Heart right ventricle (tissue), 16 donors: ENCODE measurements at regions of chr9 and their contacts with region 1.

Region 1: DNA sequence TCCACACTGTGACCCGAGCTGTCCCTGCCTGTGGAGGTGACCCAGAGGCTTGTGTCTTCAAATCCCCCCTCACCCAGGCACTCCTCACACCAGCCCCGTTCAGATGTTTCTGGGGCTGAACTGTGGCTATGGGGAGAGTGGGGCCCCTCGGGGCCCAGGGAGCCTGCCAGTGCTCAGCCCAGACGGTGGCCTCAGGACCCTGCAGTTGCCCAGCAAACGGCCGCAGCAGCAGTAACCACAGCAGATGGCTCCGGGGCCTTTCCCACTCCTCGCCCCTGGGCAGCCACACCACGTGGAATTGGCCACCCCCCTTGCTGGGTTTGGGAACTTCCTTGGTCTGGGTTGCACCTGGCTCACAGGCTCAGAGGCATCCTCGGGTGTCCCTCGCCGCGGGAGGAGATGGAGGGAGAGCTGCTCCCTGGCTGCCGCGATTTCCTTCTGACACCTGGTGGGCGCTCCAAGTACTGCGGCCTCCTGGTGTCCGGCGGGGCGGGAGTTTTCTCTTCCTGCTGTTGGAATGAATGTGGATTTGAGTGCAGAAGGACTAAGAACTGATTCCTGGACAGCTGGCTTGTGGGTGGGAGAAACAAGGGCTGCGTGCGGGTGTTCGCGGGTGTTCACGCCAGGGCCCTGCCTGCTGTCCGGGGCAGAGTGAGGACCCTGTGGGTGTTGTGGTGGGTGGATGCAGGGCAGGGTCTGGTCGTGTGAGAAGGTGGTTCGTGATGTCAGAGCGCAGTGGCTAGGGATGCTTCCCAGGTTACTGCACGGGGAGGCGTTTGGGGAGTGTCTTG is 97.5 kb downstream of the COL5A1 start:
- DNase-seq: peak; percentile 77 to 78
- ATAC-seq: peak; percentile 39 to 66 (median 58)
- H3K4me3 ChIP-seq: no peak overlapping the region
- H3K27ac ChIP-seq: peak overlapping the region in 2 of 10 donors; percentile 35 to 41
- H3K4me1 ChIP-seq: peaks cover 4 to 47% (median 11%) of the 10 kb centered on the region in 9 donors
- H3K27me3 ChIP-seq: no peaks in the 10 kb centered on the region
- CTCF ChIP-seq: peak; percentile 79 to 96 (median 90)

Region 2: DNA sequence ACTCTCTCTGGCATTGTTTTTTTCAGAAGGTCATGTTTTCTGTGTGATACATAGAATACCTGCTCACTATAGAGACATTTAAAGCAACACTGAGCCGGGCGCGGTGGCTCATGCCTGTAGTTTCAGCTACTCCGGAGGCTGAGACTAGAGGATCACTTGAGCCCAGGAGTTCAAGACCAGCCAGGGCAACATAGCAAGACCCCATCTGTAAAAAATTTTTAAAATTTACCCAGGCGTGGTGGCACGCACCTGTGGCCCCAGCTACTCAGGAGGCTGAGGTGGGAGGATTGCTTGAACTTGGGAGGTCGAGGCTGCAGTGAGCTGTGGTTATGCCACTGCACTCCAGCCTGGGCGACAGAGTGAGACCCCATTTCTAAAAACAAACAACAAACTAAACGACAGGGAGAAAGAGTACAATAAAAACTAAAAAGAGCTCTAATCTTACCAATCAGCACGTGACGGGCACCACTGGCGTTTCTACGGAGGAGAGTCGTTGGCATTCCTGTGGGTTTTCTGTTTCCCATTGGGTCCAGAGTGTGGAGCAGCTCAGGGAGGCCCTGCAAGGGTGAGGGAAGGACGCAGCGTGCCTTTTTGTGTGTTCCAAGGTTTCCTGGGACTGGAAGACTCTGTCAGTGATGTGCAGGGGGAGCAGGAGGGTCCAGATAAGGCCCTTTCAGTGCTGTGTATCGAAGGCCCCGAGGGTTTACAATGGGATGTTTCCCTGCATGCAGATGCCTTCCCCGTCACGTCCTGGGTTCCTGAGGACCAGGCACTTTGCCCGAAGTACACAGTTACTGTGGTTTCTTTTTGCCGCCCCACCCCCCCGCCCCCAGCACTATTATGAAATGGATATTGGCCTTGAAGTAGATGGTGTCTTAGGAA is 567.5 kb before region 1 on chr9:
- intact Hi-C with region 1: loop called in 4 of 10 experiments (anchors 5 to 10 kb)
- DNase-seq: no peak
- ATAC-seq: peak in 4 of 8 donors; percentile 2 to 28 (median 10)
- H3K4me3 ChIP-seq: no peak overlapping the region
- H3K27ac ChIP-seq: peak overlapping the region in 6 of 10 donors; percentile 31 to 62 (median 48)
- H3K4me1 ChIP-seq: peaks cover 0 to 42% (median 18%) of the 10 kb centered on the region in 9 donors
- H3K27me3 ChIP-seq: peaks cover 0 to 23% (median 20%) of the 10 kb centered on the region in 7 donors
- CTCF ChIP-seq: no peak

Region 3: GRCh38 chr9:134449221-134449894 is 289.7 kb before region 1 on chr9:
- intact Hi-C with region 1: loop called (anchors 1 to 10 kb)
- DNase-seq: peak; percentile 87 to 94
- ATAC-seq: peak; percentile 93 to 97 (median 96)
- H3K4me3 ChIP-seq: no peak overlapping the region
- H3K27ac ChIP-seq: no peak overlapping the region
- H3K4me1 ChIP-seq: peaks cover 0 to 6% (median 0%) of the 10 kb centered on the region in 9 donors
- H3K27me3 ChIP-seq: no peaks in the 10 kb centered on the region
- CTCF ChIP-seq: peak; percentile 86 to 96 (median 93)

Region 4: DNA sequence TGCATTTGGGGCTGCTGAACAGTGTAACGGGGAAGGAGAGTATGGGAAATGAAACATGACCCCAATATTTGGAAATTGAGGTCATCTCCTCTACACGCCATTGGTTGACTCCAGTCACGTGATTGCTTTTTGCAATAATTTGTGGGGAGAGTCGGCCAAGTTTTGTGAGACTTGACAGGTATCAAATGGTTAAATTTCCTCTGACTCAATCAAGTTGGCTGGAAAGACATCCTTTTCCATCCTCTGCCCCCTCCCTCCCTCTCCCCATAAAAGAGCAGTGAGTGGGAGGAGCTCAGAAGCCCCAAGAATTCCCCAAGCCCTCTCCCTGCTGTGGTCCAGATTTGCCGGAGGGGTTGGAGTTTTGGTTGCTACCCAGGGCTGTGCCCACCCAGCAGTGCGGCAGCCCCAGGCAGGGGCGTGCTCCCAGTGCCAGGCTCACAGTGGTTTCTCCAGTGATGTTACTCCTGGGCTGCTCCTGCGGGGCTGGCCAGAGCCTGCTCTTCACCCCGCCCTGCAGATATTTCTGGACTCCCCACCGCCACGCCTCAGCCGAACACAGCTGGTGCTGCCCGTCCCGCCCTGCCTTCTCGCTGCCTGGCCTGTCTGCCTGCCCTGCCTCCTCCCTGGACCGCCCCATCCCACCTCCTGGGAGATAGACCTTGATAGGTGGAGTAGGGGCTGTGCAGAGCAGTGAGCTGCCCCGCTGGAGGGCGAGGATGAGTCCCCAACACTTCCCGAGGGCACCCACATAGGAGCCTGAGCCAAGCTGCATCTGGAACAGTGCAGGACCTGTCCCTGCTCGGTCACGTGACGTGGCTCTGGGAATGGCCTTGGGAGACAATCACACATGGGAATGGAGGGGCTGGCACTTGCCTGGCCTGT is 94.1 kb before region 1 on chr9:
- intact Hi-C with region 1: no loop called
- DNase-seq: peak; percentile 73 to 76
- ATAC-seq: peak; percentile 39 to 72 (median 53)
- H3K4me3 ChIP-seq: peak overlapping the region in 9 of 10 donors; percentile 24 to 49 (median 47)
- H3K27ac ChIP-seq: peak overlapping the region in 9 of 10 donors; percentile 36 to 66 (median 58)
- H3K4me1 ChIP-seq: peaks cover 5 to 58% (median 38%) of the 10 kb centered on the region in 9 donors
- H3K27me3 ChIP-seq: peaks cover 0 to 30% (median 0%) of the 10 kb centered on the region in 7 donors
- CTCF ChIP-seq: no peak

Region 5: GRCh38 chr9:134689321-134690181 is 49.5 kb before region 1 on chr9:
- intact Hi-C with region 1: loop called in 1 of 10 experiments (anchors 5 kb)
- DNase-seq: peak; percentile 70 to 76
- ATAC-seq: peak; percentile 71 to 89 (median 82)
- H3K4me3 ChIP-seq: no peak overlapping the region
- H3K27ac ChIP-seq: peak overlapping the region in 5 of 10 donors; percentile 19 to 52 (median 29)
- H3K4me1 ChIP-seq: peaks cover 0 to 38% (median 15%) of the 10 kb centered on the region in 9 donors
- H3K27me3 ChIP-seq: no peaks in the 10 kb centered on the region
- CTCF ChIP-seq: peak; percentile 66 to 87 (median 81)

Region 6: DNA sequence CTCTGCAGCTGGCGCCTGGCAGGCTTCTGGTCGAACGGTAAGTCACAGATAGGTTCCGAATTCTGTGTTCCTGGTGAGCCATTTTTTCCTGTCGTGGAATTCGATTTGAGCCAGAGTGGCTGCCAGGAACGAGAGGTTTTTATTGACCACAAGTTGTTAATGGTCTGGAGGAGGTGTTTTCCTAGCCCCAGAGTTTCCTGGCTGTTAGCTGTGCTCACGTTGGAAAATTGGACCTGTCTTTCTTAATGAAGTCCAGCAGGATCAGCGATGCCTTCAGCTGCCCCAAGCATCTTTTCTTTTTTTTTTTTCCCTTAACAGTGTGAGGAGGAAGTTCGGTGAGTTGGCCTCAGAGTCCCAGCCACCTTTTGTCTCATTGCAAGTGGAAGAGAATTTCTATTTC is 34.6 kb before region 1 on chr9:
- intact Hi-C with region 1: loop called in 8 of 10 experiments (anchors 2 to 5 kb)
- DNase-seq: peak in 1 of 2 donors; percentile 1
- ATAC-seq: no peak
- H3K4me3 ChIP-seq: no peak overlapping the region
- H3K27ac ChIP-seq: peak overlapping the region in 4 of 10 donors; percentile 9 to 85 (median 61)
- H3K4me1 ChIP-seq: peaks cover 17 to 53% (median 28%) of the 10 kb centered on the region in 9 donors
- H3K27me3 ChIP-seq: peaks cover 0 to 4% (median 0%) of the 10 kb centered on the region in 7 donors
- CTCF ChIP-seq: no peak